Mammary epithelial cell (primary cell): ENCODE measurements at regions of chr9 and their contacts with region 1.

Region 1: DNA sequence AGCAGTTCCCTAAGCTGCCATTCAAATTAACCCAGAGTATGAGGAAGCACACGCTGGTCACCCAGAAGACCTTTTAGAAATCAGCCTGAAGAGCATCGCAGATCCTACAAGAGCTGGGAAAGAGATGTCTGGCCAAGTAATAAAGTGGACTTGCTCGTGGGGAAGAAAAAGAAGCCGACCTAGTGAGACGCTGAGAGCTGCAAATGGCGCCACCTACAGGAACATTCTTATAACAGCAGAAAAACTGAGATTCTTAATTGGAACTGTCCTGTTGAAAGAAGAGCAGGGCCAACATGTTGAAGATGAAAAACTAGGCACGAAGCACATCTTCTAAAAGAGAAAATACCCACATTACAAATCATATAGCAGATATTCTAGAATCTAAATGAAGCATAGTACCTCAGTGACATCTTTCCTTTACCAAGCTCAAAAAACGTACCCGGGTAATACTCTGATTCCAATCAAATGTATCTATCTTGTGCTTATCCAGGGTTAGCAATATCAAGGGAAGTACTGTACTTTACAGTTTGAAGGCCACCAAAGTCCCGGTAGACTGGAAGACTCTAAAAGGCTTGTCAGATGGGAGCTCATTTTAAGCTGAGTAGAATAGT is 3.9 kb upstream of the GNAQ start:
- DNase-seq: peak; percentile 61
- H3K4me3 ChIP-seq: no peak overlapping the region
- H3K27ac ChIP-seq: no peak overlapping the region
- H3K4me1 ChIP-seq: peaks cover 9% of the 10 kb centered on the region
- H3K27me3 ChIP-seq: no peaks in the 10 kb centered on the region
- CTCF ChIP-seq: peak; percentile 78 to 83

Region 2: GRCh38 chr9:77569173-77569734 is 466.2 kb before region 1 on chr9:
- CTCF ChIA-PET with region 1: interaction called, 10 read pairs
- dilution Hi-C with region 1: no loop called
- in situ Hi-C with region 1: no loop called
- intact Hi-C with region 1: no loop called
- DNase-seq: no peak
- H3K4me3 ChIP-seq: no peak overlapping the region
- H3K27ac ChIP-seq: no peak overlapping the region
- H3K4me1 ChIP-seq: no peaks in the 10 kb centered on the region
- H3K27me3 ChIP-seq: no peaks in the 10 kb centered on the region
- CTCF ChIP-seq: no peak

Region 3: DNA sequence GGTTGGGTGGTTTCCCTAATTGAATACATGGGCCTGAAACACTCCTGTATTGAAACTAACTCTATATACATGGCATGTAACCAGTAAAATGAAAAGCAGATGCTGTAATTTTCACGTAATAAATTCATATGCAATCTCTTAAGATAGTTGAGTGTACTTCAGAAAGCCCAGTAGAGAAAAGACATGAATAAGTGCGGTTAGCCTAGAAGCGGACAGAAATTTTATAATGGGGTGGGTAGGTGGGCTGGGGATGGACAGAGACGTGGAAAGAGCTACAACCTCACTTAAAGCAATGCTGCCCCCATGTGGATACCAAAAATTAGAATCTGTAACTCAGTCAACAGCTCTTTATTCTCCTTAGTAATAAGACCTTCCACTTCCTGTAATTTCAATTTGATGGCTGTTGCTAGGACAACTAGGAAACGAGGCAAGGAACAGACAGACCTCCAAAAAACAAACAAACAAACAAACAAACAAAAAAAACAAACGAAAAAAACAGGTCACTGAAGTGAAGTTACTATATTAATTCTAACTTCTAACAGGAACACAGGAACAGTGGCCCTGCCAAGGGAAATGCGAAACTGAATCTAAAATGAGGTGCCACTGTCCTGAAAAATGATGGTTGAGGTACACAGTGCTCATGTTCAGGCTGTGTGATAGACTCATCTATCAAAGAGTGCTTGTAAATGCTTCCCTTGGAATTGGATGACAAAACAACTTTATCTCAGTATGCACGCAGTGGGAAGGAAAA is 284.0 kb before region 1 on chr9:
- CTCF ChIA-PET with region 1: no interaction called
- dilution Hi-C with region 1: no loop called
- in situ Hi-C with region 1: no loop called
- intact Hi-C with region 1: loop called (anchors 10 kb)
- DNase-seq: peak; percentile 23
- H3K4me3 ChIP-seq: no peak overlapping the region
- H3K27ac ChIP-seq: no peak overlapping the region
- H3K4me1 ChIP-seq: no peaks in the 10 kb centered on the region
- H3K27me3 ChIP-seq: no peaks in the 10 kb centered on the region
- CTCF ChIP-seq: peak; percentile 43 to 56

Region 4: DNA sequence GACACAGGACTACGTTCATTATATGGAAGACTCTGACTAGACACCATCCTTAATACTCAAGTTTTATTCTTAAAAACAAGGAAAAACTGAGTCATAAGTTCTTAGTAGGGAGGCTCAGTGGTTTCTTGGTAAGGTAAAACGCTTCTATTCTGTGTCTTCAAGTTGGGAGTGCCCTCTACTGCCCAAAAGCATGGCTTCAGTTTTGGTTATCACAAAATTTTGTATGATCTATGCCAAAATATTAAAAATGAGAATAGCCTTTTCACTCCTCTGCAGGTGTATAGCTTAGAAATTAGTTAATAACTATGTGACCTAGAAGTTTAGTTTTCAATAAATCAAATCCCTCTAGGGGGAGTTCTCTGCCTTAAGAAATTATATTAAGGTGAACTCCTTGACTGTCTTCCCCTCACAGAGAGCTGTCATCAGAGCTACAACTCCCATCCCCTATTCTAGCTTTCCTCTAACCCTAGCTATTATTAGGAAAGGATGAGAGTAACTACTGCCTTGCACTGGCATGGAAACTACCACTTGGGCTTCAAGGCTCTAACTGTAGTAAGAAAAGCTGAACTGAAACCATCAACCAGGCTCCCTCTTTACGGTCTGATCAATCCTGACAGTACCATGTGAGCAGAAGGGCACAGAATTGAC is 193.6 kb before region 1 on chr9:
- CTCF ChIA-PET with region 1: interaction called, 4 read pairs
- dilution Hi-C with region 1: no loop called
- in situ Hi-C with region 1: no loop called
- intact Hi-C with region 1: loop called (anchors 1 kb)
- DNase-seq: no peak
- H3K4me3 ChIP-seq: no peak overlapping the region
- H3K27ac ChIP-seq: no peak overlapping the region
- H3K4me1 ChIP-seq: peaks cover 24% of the 10 kb centered on the region
- H3K27me3 ChIP-seq: no peaks in the 10 kb centered on the region
- CTCF ChIP-seq: peak; percentile 12 to 42

Region 5: GRCh38 chr9:77977210-77977611 is 58.3 kb before region 1 on chr9:
- CTCF ChIA-PET with region 1: interaction called, 15 read pairs
- dilution Hi-C with region 1: no loop called
- in situ Hi-C with region 1: loop called in 1 of 2 experiments (anchors 10 kb)
- intact Hi-C with region 1: loop called (anchors 1 kb)
- DNase-seq: peak; percentile 84
- H3K4me3 ChIP-seq: no peak overlapping the region
- H3K27ac ChIP-seq: peak overlapping the region; percentile 33
- H3K4me1 ChIP-seq: peaks cover 47% of the 10 kb centered on the region
- H3K27me3 ChIP-seq: no peaks in the 10 kb centered on the region
- CTCF ChIP-seq: peak; percentile 46 to 70

Region 6: DNA sequence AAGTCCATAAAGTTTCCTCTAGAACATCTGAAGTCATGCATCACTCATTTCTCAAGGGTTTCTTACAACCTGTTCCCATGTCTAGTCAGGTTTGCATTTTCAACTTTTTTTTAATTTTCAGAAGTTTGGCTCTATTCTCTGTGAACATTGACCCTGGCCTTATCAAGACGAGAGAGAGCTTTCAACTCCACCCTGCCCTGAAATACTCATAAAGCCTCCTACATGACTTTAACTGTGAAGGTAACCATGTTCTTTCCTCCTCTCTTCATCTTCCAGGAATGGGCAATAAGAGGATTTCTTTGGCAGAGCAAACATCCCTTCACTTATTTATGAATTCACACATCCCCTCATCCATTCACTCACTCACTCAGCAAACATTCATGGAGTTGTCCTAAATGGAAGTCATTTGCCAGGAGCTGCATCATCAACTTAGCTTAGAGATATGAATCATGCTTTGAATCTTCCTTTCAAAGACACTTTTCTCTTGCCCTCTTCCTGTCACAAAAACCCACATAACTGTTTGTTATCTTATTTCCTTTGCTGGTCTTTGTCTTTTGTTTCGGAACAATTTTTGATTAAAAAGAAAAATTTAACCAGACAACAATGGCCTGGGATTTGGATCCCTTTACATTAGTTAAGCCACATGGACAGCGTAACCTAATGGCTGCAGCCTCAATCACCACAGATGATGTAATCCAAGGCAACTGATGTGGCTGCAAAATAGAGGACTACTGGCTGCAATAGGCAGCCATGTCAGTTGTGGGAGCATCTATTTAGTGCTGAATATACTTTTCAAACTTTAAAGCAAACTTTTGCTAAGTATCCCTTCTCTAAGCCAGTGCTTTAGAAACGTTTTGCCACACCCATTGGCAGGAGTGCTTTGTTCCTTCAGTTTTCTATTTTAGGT is 39.1 kb after region 1 on chr9:
- CTCF ChIA-PET with region 1: no interaction called
- dilution Hi-C with region 1: no loop called
- in situ Hi-C with region 1: no loop called
- intact Hi-C with region 1: no loop called
- DNase-seq: no peak
- H3K4me3 ChIP-seq: no peak overlapping the region
- H3K27ac ChIP-seq: no peak overlapping the region
- H3K4me1 ChIP-seq: no peaks in the 10 kb centered on the region
- H3K27me3 ChIP-seq: no peaks in the 10 kb centered on the region
- CTCF ChIP-seq: no peak

Region 7: DNA sequence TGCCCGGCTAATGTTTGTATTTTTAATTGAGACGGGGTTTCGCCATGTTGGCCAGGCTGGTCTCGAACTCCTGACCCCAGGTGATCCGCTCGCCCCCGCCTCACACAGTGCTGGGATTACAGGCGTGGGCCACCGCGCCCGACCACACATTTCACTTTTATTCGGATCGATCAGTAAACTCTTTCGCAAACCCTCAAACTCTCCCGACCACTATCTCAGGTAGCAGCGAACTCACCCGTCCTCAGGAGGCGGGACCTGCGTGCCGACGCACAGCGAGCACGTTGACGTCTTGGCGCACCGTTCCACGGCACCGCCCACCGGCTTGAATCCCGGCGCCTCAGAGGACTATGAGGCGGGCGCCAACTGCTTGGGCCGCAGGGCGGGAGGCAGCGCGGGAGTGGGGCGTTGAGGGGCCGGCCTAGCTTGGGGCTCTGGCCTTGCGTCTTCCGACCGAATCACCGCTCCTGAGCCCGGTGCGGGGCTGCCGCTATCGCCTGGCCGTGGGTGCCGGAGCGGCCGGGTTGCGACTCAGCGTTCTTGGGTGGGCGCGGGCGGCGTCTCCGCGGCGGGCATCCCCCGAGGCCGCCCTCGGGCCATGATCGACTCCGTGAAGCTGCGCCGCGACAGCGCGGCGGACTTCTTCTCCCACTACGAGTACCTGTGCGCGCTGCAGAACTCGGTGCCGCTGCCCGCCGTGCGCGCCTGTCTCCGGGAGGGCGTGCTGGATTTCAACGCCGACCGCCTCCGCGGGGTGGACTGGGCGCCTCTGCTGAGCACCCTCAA is 200.5 kb after region 1 on chr9 and contains the start of gene CEP78:
- CTCF ChIA-PET with region 1: no interaction called
- dilution Hi-C with region 1: no loop called
- in situ Hi-C with region 1: no loop called
- intact Hi-C with region 1: loop called (anchors 10 kb)
- DNase-seq: peak; percentile 94
- H3K4me3 ChIP-seq: peak within 1 kb of the TSS; percentile 64 to 88 (median 67)
- H3K27ac ChIP-seq: peak within 1 kb of the TSS; percentile 74
- H3K4me1 ChIP-seq: peaks cover 5% of the 10 kb centered on the region
- H3K27me3 ChIP-seq: no peaks in the 10 kb centered on the region
- CTCF ChIP-seq: no peak
- total RNA-seq, gene CEP78: 16.7 to 24.7 TPM